SK-N-SH (cell line): ENCODE measurements at regions of chr10 and their contacts with region 1.

Region 1: DNA sequence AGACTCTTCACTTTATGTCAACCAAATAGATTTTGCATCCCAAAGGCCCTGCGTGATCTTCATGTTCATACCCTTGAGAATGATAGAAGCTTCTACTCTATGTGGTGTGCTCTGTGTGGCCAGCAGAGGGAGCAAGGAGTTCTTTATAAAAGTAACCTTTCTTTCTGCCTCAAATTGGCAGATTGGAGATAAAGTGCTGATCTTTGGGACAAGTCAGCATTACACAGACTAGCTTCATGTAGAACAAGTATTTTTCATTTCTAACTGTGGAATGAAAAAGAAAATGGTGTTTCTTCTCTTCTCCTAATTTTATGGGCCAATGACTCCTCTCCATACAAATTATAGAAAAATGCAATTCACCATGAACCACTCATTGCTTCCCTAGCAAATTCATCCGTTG is 1214.1 kb downstream of the SORCS1 start:
- DNase-seq: peak; percentile 32
- H3K4me3 ChIP-seq: no peak overlapping the region; a peak in 1 of 4 replicates
- H3K27ac ChIP-seq: no peak overlapping the region; a peak in 1 of 4 replicates
- H3K4me1 ChIP-seq: peaks cover 0 to 2% of the 10 kb centered on the region in 2 experiments; a peak in 1 of 4 replicates
- H3K27me3 ChIP-seq: no peaks in the 10 kb centered on the region
- CTCF ChIP-seq: peak; percentile 70
- EP300 ChIP-seq: no peak
- RAD21 ChIP-seq: peak; percentile 84

Region 2: DNA sequence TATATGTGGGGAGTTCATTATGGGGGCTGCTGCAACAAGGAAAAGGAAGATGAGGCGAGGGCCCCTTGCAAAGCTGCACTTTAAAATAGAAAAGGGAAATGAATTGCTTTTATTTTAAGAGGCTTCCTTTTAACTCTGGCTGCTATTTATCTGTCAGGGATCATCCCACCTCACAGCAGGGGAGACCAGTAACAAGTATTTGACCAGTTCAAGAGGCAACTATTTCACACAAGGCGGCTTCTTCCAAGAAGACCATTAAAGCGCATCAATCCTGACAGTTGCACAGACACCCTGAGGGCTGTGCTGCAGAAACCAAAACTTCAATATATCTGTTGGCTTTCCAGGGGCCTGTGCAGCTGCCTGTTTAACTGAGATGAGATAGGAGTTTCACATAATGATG is 300.1 kb before region 1 on chr10:
- CTCF ChIA-PET with region 1: no interaction called
- POLR2A ChIA-PET with region 1: no interaction called
- DNase-seq: no peak
- H3K4me3 ChIP-seq: no peak overlapping the region
- H3K27ac ChIP-seq: no peak overlapping the region
- H3K4me1 ChIP-seq: no peaks in the 10 kb centered on the region; a peak in 1 of 4 replicates
- H3K27me3 ChIP-seq: no peaks in the 10 kb centered on the region
- CTCF ChIP-seq: no peak
- EP300 ChIP-seq: no peak
- RAD21 ChIP-seq: no peak

Region 3: GRCh38 chr10:105963334-105963884 is 13.0 kb after region 1 on chr10:
- CTCF ChIA-PET with region 1: interaction called, 24 read pairs
- POLR2A ChIA-PET with region 1: no interaction called
- DNase-seq: no peak
- H3K4me3 ChIP-seq: no peak overlapping the region
- H3K27ac ChIP-seq: no peak overlapping the region
- H3K4me1 ChIP-seq: peaks cover 0 to 5% of the 10 kb centered on the region in 2 experiments; a peak in 2 of 4 replicates
- H3K27me3 ChIP-seq: no peaks in the 10 kb centered on the region
- CTCF ChIP-seq: no peak
- EP300 ChIP-seq: no peak
- RAD21 ChIP-seq: no peak

Region 4: GRCh38 chr10:105986912-105987635 is 36.7 kb after region 1 on chr10:
- CTCF ChIA-PET with region 1: no interaction called
- POLR2A ChIA-PET with region 1: no interaction called
- DNase-seq: no peak
- H3K4me3 ChIP-seq: no peak overlapping the region
- H3K27ac ChIP-seq: no peak overlapping the region
- H3K4me1 ChIP-seq: no peaks in the 10 kb centered on the region; a peak in 1 of 4 replicates
- H3K27me3 ChIP-seq: no peaks in the 10 kb centered on the region
- CTCF ChIP-seq: no peak
- EP300 ChIP-seq: no peak
- RAD21 ChIP-seq: no peak

Region 5: DNA sequence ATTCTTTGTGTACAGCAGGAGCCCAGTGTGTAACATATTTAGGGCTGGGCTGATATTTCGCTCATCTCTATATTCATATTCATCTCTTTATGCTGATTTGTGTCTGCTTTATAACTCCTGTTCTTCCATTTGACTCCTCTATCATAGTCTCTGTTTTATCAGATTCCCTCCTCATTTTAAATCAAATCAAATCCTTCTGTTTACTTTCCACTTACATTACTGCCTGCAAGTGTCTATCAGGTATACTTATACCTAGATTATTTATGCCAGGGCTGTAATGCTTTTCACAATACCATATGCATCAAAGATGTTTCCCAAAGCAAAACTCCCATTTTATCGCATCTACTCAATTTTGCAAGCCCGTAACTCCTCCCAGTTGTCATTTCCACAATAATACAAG is 223.4 kb after region 1 on chr10:
- CTCF ChIA-PET with region 1: interaction called, 20 read pairs
- POLR2A ChIA-PET with region 1: no interaction called
- DNase-seq: no peak
- H3K4me3 ChIP-seq: no peak overlapping the region
- H3K27ac ChIP-seq: no peak overlapping the region; a peak in 1 of 4 replicates
- H3K4me1 ChIP-seq: no peaks in the 10 kb centered on the region
- H3K27me3 ChIP-seq: no peaks in the 10 kb centered on the region
- CTCF ChIP-seq: no peak
- EP300 ChIP-seq: peak in 1 of 2 experiments; percentile 81; a peak in 2 of 4 replicates
- RAD21 ChIP-seq: no peak

Region 6: DNA sequence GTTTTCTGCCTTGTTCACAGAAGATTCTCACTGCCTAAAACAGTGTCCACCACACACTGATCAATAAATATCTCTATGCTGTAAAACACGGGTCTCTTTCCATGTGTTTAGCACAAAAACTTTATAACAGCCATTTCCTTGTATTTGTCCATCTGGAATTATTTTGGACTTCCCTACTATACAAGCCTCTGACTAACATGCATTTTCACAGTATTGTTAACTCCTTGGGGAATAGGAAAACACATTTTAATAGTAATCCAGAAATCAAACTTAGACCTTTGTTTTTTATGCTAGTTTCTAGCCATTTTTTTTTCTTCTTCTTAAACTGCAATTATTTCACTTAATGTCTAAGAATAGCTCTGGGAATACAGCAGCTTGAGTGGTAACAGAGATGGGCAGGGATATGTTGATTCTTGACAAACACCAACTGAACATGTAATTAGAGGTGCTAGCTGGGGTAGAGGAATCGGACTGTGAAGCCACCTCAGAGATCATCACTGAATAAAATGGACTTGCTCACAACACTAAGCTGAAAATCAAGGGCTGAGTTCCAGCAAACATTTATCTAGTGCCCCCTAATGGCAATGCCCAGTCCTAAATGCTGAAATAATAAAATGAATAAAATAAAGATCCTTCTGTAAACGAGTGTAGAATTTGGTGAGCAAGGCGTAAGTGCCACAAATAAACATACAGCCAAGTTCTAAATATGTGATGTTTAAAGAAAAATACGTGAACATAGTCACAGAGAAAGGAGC is 621.0 kb after region 1 on chr10:
- CTCF ChIA-PET with region 1: interaction called, 10 read pairs
- POLR2A ChIA-PET with region 1: no interaction called
- DNase-seq: peak; percentile 34
- H3K4me3 ChIP-seq: no peak overlapping the region; a peak in 1 of 4 replicates
- H3K27ac ChIP-seq: peak overlapping the region in 1 of 2 experiments; percentile 5; a peak in 1 of 4 replicates
- H3K4me1 ChIP-seq: peaks cover 9 to 11% of the 10 kb centered on the region in 2 experiments; a peak in 3 of 4 replicates
- H3K27me3 ChIP-seq: no peaks in the 10 kb centered on the region
- CTCF ChIP-seq: peak; percentile 59
- EP300 ChIP-seq: no peak
- RAD21 ChIP-seq: peak; percentile 82